Calu3 (cell line): ENCODE measurements at regions of chr17 and their contacts with region 1.

Region 1: GRCh38 chr17:56681561-56682266 is 88.2 kb downstream of the NOG start:
- DNase-seq: peak; percentile 32
- H3K4me3 Mint-ChIP-seq: no peak overlapping the region
- H3K27ac Mint-ChIP-seq: no peak overlapping the region
- H3K4me1 Mint-ChIP-seq: peaks cover 25% of the 10 kb centered on the region
- H3K27me3 Mint-ChIP-seq: no peaks in the 10 kb centered on the region
- CTCF ChIP-seq: no peak

Region 2: GRCh38 chr17:56699186-56699895 is 17.6 kb after region 1 on chr17:
- CTCF ChIA-PET with region 1: interaction called, 11 read pairs
- intact Hi-C with region 1: no loop called
- DNase-seq: peak; percentile 86
- H3K4me3 Mint-ChIP-seq: peak overlapping the region; percentile 28
- H3K27ac Mint-ChIP-seq: peak overlapping the region; percentile 95
- H3K4me1 Mint-ChIP-seq: peaks cover 14% of the 10 kb centered on the region
- H3K27me3 Mint-ChIP-seq: no peaks in the 10 kb centered on the region
- CTCF ChIP-seq: no peak